PC-9 (cell line): ENCODE measurements at regions of chr10 and their contacts with region 1.

Region 1: GRCh38 chr10:69957886-69958555 is 94.6 kb upstream of the MACROH2A2 start:
- DNase-seq: peak; percentile 29 to 46
- H3K4me3 ChIP-seq: no peak overlapping the region
- H3K27ac ChIP-seq: no peak overlapping the region
- H3K4me1 ChIP-seq: no peaks in the 10 kb centered on the region
- H3K27me3 ChIP-seq: no peaks in the 10 kb centered on the region
- CTCF ChIP-seq: peak; percentile 91

Region 2: GRCh38 chr10:69644658-69645295 is 313.2 kb before region 1 on chr10:
- CTCF ChIA-PET with region 1: no interaction called
- POLR2A ChIA-PET with region 1: no interaction called
- intact Hi-C with region 1: loop called (anchors 1 kb)
- DNase-seq: peak; percentile 46 to 68
- H3K4me3 ChIP-seq: no peak overlapping the region
- H3K27ac ChIP-seq: no peak overlapping the region
- H3K4me1 ChIP-seq: peaks cover 10% of the 10 kb centered on the region
- H3K27me3 ChIP-seq: peaks cover 35% of the 10 kb centered on the region
- CTCF ChIP-seq: peak; percentile 95

Region 3: DNA sequence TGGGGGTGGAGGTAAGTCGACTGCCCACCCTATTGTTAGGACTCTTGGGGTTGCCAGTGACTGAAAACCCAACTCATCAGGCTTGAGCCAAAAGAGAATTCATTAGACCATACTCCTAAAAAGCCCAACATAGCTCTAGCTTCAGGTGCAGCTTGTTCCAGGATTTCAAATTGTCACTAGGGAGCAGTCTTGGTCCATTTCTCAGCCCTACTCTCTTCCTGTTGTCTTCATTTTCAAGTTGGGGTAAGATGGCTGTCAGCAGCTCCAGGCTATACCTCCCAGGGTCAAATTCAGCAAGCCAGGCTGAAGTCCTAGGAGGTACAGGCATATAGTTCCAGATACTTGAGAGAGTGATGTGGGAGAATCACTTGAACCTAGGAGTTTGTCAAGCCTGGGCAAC is 171.2 kb before region 1 on chr10:
- CTCF ChIA-PET with region 1: interaction called, 15 read pairs
- POLR2A ChIA-PET with region 1: no interaction called
- intact Hi-C with region 1: loop called (anchors 1 kb)
- DNase-seq: no peak
- H3K4me3 ChIP-seq: no peak overlapping the region
- H3K27ac ChIP-seq: no peak overlapping the region
- H3K4me1 ChIP-seq: no peaks in the 10 kb centered on the region
- H3K27me3 ChIP-seq: peaks cover 46% of the 10 kb centered on the region
- CTCF ChIP-seq: peak; percentile 57

Region 4: DNA sequence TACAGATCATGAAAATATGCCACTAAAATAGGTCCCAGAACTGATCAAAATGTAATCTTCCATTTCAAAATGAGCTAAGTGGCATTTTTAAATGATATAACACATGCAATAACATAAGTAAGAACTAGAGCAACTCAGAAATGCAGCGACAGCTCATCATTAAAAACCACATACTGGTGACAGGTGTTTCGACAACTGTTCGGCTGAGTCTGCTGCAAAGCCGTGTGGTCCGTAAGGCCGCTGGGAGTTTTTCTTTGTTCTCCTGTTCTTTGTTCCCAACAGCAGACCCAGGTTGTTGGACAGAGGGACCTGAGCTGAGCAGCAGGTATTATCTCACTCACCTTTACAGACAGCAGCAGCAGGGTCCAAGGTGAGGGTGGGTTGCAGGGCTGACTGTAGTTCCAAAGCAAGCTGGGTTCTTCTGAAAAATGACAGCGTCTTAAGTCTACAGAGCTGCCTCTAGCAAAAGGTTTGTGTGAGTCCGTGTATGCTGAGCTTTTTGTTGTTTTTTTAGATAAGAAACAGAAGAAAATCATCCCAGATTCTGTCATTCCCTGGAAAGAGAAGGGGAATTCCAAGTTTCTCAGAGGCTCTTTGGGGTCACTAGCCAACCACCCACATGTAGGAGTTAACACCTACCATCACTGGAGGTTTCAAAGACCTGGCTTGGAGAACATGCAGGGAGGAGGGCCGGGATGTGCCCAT is 49.2 kb after region 1 on chr10:
- CTCF ChIA-PET with region 1: no interaction called
- POLR2A ChIA-PET with region 1: no interaction called
- intact Hi-C with region 1: no loop called
- DNase-seq: no peak
- H3K4me3 ChIP-seq: no peak overlapping the region
- H3K27ac ChIP-seq: no peak overlapping the region
- H3K4me1 ChIP-seq: no peaks in the 10 kb centered on the region
- H3K27me3 ChIP-seq: peaks cover 26% of the 10 kb centered on the region; the same call in 1 of the 2 replicates
- CTCF ChIP-seq: no peak

Region 5: DNA sequence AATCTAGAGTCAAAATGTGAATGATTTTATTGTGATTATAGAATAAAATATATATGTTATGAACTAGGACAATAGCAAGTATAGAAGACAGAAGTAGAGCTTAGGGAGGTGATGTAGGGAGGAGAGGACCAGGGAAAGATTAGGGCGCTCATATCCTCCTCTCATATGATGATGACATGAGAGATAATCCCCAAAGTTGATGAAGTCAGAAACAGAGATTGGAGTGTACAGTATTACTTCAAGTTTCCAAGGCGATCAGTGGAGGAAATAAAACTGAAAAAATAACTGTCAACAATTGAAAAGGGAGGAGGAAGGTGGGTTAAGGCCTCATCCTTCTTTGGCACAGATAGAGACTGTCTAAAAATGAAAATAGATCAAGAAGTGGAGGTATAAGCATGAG is 109.6 kb after region 1 on chr10:
- CTCF ChIA-PET with region 1: interaction called, 11 read pairs
- POLR2A ChIA-PET with region 1: no interaction called
- intact Hi-C with region 1: no loop called
- DNase-seq: no peak
- H3K4me3 ChIP-seq: no peak overlapping the region
- H3K27ac ChIP-seq: no peak overlapping the region
- H3K4me1 ChIP-seq: no peaks in the 10 kb centered on the region
- H3K27me3 ChIP-seq: peaks cover 17% of the 10 kb centered on the region
- CTCF ChIP-seq: no peak